Right cardiac atrium (tissue), 5 donors: ENCODE measurements at regions of chr11 and their contacts with region 1.

Region 1: DNA sequence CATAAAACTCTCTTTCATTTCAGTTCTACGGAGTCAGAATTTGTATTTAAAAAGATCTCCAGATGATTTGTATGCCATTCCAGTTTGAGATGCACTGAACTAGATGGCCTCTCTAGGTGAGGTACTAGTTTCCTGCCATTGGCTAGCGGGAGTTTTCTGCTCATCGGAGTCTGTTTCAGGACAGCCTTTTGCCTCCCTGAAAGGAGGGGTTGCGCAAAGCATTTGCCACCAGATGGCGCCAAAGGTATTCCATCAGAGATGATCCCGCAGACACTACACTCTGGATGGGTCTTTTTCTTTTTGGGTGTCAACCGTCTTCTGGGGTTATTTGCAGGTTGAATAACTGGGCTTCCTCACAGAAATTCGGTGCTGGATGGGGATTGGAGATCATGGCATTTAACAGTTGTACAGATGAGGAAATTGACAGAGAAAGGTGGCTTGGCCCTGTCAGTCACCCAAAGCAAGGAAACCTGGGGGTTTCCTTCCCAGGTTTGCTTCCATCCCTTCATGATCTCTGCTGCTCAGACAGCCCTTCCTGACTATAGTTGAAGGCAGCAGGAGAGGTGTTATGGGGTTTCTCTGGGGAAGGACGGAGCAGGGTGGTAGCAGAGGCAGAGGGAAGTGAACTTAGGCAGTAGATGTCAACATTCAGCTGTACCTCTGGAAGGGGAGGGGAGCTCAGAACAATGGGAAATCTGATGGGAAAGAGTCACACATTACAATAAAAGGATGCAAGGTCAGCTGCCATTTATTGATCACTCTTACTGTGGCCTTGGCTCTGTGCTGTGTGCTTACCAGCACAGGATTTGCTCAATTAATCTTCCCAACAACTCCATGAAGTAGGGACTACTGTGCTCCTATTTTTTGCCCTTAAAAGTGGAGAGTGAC is 81.6 kb downstream of the CCDC81 start:
- DNase-seq: peak; percentile 85 to 94 (median 90)
- ATAC-seq: peak; percentile 86 to 88
- H3K4me3 ChIP-seq: no peak overlapping the region
- H3K27ac ChIP-seq: peak overlapping the region; percentile 6
- H3K4me1 ChIP-seq: peaks cover 13% of the 10 kb centered on the region
- H3K27me3 ChIP-seq: no peaks in the 10 kb centered on the region

Region 2: DNA sequence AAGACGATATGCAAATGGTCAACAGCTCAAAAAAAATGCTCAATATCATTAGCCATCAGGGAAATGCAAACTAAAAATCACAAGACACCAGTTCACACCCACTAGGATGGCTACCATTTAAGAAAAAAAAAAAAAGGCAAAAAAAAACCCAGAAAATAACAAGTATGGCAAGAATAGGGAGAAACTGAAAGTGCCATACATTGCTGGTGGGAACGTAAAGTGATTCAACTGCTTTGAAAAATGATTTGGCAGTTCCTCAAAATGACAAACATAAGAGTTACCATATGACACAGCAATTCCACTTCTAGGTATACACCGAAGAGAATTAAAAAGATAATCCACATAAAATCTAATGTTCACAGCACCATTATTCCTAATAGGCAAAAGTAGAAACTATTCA is 434.9 kb before region 1 on chr11:
- intact Hi-C with region 1: loop called in 1 of 4 experiments (anchors 10 kb)
- DNase-seq: no peak
- ATAC-seq: no peak
- H3K4me3 ChIP-seq: no peak overlapping the region
- H3K27ac ChIP-seq: no peak overlapping the region
- H3K4me1 ChIP-seq: no peaks in the 10 kb centered on the region
- H3K27me3 ChIP-seq: no peaks in the 10 kb centered on the region

Region 3: DNA sequence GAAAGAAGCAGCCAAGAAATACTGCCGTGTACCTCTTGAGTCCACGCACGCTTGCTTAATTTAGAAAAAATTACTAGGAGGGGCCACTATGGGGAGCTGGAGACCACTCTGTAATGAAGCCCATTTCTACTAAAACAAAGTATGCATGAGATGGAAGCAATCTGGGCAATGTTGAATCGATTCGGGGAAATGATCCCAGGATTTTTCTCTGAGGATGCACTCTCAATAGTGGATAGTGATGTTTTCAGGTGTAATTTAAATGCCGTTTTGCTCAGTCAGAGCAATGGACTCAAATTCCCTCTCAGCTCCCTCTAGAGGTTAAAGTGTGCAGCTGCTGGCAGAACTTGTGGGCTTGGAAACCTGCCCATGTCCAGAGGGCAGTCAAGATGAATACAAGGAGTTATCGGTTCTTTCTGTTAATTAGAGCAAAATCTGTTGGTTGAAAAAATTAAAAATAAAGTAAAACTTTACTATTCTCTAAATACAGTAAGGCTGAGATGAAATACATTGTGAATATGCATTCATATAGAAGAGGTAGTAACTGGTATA is 152.0 kb after region 1 on chr11:
- intact Hi-C with region 1: loop called in 3 of 4 experiments (anchors 5 kb)
- DNase-seq: peak; percentile 61 to 87 (median 84)
- ATAC-seq: peak; percentile 80 to 85
- H3K4me3 ChIP-seq: peak overlapping the region; percentile 30
- H3K27ac ChIP-seq: no peak overlapping the region
- H3K4me1 ChIP-seq: peaks cover 3% of the 10 kb centered on the region
- H3K27me3 ChIP-seq: no peaks in the 10 kb centered on the region

Region 4: GRCh38 chr11:86620891-86621521 is 164.7 kb after region 1 on chr11:
- intact Hi-C with region 1: loop called in 1 of 4 experiments (anchors 10 kb)
- DNase-seq: no peak
- ATAC-seq: peak; percentile 69 to 71
- H3K4me3 ChIP-seq: no peak overlapping the region
- H3K27ac ChIP-seq: peak overlapping the region; percentile 52
- H3K4me1 ChIP-seq: peaks cover 5% of the 10 kb centered on the region
- H3K27me3 ChIP-seq: no peaks in the 10 kb centered on the region

Region 5: DNA sequence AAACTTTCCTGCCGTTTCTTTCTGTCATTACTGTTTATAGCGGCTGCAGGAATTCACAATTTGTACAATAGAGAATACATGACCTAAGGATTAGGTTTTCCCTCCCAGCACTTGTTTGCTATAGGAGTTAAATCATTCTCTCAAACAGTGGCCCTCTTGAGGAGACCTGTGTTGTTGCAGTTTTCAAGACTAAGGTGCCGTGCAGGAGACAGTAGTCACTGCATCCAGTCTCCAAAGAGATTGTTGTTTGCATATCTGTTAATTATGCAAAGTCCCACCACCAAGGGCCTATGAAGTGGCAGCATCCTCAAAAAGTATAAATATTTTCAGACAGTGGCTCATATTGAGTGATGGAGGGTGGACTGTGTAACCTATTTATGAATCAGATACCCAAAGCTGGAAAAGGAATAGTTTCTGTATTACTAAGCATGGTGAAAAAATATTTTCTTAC is 346.3 kb after region 1 on chr11:
- intact Hi-C with region 1: loop called in 2 of 4 experiments (anchors 5 kb)
- DNase-seq: no peak
- ATAC-seq: peak in 1 of 2 donors; percentile 27
- H3K4me3 ChIP-seq: peak overlapping the region; percentile 87
- H3K27ac ChIP-seq: no peak overlapping the region
- H3K4me1 ChIP-seq: peaks cover 8% of the 10 kb centered on the region
- H3K27me3 ChIP-seq: no peaks in the 10 kb centered on the region

Region 6: GRCh38 chr11:86818466-86819192 is 362.3 kb after region 1 on chr11:
- intact Hi-C with region 1: loop called (anchors 2 to 5 kb)
- DNase-seq: no peak
- ATAC-seq: peak; percentile 20 to 25
- H3K4me3 ChIP-seq: no peak overlapping the region
- H3K27ac ChIP-seq: no peak overlapping the region
- H3K4me1 ChIP-seq: peaks cover 7% of the 10 kb centered on the region
- H3K27me3 ChIP-seq: no peaks in the 10 kb centered on the region